ENCODE measurements at regions of chr2 and their contacts with region 1.

Region 1: GRCh38 chr2:119174216-119175037 is 15.9 kb upstream of the C1QL2 start:
- DNase-seq: peak in 4 of 5 donors; percentile 17 to 36 (median 27)
- H3K4me3 ChIP-seq: no peak overlapping the region
- H3K4me3 Mint-ChIP-seq: no peak overlapping the region
- H3K27ac ChIP-seq: no peak overlapping the region
- H3K27ac Mint-ChIP-seq: no peak overlapping the region
- H3K4me1 ChIP-seq: no peaks in the 10 kb centered on the region
- H3K4me1 Mint-ChIP-seq: no peaks in the 10 kb centered on the region
- H3K27me3 ChIP-seq: no peaks in the 10 kb centered on the region
- H3K27me3 Mint-ChIP-seq: peaks cover 0 to 2% of the 10 kb centered on the region in 2 donors

Region 2: GRCh38 chr2:119119999-119120756 is 54.2 kb before region 1 on chr2:
- CTCF ChIA-PET with region 1: no interaction called
- POLR2A ChIA-PET with region 1: no interaction called
- intact Hi-C with region 1: no loop called
- DNase-seq: no peak
- H3K4me3 ChIP-seq: no peak overlapping the region
- H3K4me3 Mint-ChIP-seq: no peak overlapping the region
- H3K27ac ChIP-seq: no peak overlapping the region
- H3K27ac Mint-ChIP-seq: no peak overlapping the region
- H3K4me1 ChIP-seq: no peaks in the 10 kb centered on the region
- H3K4me1 Mint-ChIP-seq: no peaks in the 10 kb centered on the region
- H3K27me3 ChIP-seq: no peaks in the 10 kb centered on the region
- H3K27me3 Mint-ChIP-seq: peaks cover 2 to 3% of the 10 kb centered on the region in 2 donors

Region 3: GRCh38 chr2:119158563-119159347 is 15.7 kb before region 1 on chr2 and contains the start of gene C1QL2:
- CTCF ChIA-PET with region 1: interaction called, 12 read pairs
- POLR2A ChIA-PET with region 1: no interaction called
- intact Hi-C with region 1: no loop called
- DNase-seq: no peak
- H3K4me3 ChIP-seq: no peak within 1 kb of the TSS
- H3K4me3 Mint-ChIP-seq: no peak within 1 kb of the TSS
- H3K27ac ChIP-seq: no peak within 1 kb of the TSS
- H3K27ac Mint-ChIP-seq: no peak within 1 kb of the TSS
- H3K4me1 ChIP-seq: no peaks in the 10 kb centered on the region
- H3K4me1 Mint-ChIP-seq: peaks cover 0 to 6% (median under 1%) of the 10 kb centered on the region in 4 donors
- H3K27me3 ChIP-seq: peaks cover 10% of the 10 kb centered on the region
- H3K27me3 Mint-ChIP-seq: peaks cover 33 to 34% of the 10 kb centered on the region in 2 donors
- total RNA-seq, gene C1QL2: not detected

Region 4: GRCh38 chr2:119333360-119333759 is 158.9 kb after region 1 on chr2:
- CTCF ChIA-PET with region 1: no interaction called
- POLR2A ChIA-PET with region 1: no interaction called
- intact Hi-C with region 1: no loop called
- DNase-seq: no peak
- H3K4me3 ChIP-seq: no peak overlapping the region
- H3K4me3 Mint-ChIP-seq: no peak overlapping the region
- H3K27ac ChIP-seq: no peak overlapping the region
- H3K27ac Mint-ChIP-seq: no peak overlapping the region
- H3K4me1 ChIP-seq: no peaks in the 10 kb centered on the region
- H3K4me1 Mint-ChIP-seq: peaks cover 0 to 3% (median 1%) of the 10 kb centered on the region in 4 donors
- H3K27me3 ChIP-seq: no peaks in the 10 kb centered on the region
- H3K27me3 Mint-ChIP-seq: no peaks in the 10 kb centered on the region